ENCODE measurements at regions of chr9 and their contacts with region 1.

Region 1: GRCh38 chr9:89602978-89603766 is 1.6 kb upstream of the GADD45G start:
- DNase-seq: peak; percentile 85
- H3K4me3 Mint-ChIP-seq: peak overlapping the region; percentile 92
- H3K27ac Mint-ChIP-seq: peak overlapping the region; percentile 81
- H3K4me1 Mint-ChIP-seq: peaks cover 32% of the 10 kb centered on the region
- H3K27me3 Mint-ChIP-seq: peaks cover 10% of the 10 kb centered on the region

Region 2: GRCh38 chr9:89310475-89311346 is 292.5 kb before region 1 on chr9 and contains the start of gene CKS2:
- intact Hi-C with region 1: loop called (anchors 2 kb)
- DNase-seq: peak; percentile 100
- H3K4me3 Mint-ChIP-seq: peak within 1 kb of the TSS; percentile 92
- H3K27ac Mint-ChIP-seq: peak within 1 kb of the TSS; percentile 98
- H3K4me1 Mint-ChIP-seq: peaks cover 31% of the 10 kb centered on the region
- H3K27me3 Mint-ChIP-seq: peaks cover 2% of the 10 kb centered on the region
- total RNA-seq, gene CKS2: 148 and 162 TPM in 2 replicates

Region 3: GRCh38 chr9:89418882-89419640 is 184.1 kb before region 1 on chr9:
- intact Hi-C with region 1: loop called (anchors 2 kb)
- DNase-seq: peak; percentile 65
- H3K4me3 Mint-ChIP-seq: peak overlapping the region; percentile 92
- H3K27ac Mint-ChIP-seq: peak overlapping the region; percentile 100
- H3K4me1 Mint-ChIP-seq: peaks cover 99% of the 10 kb centered on the region
- H3K27me3 Mint-ChIP-seq: no peaks in the 10 kb centered on the region

Region 4: GRCh38 chr9:89738137-89738932 is 135.2 kb after region 1 on chr9:
- intact Hi-C with region 1: loop called (anchors 1 kb)
- DNase-seq: no peak
- H3K4me3 Mint-ChIP-seq: no peak overlapping the region
- H3K27ac Mint-ChIP-seq: peak overlapping the region; percentile 86
- H3K4me1 Mint-ChIP-seq: peaks cover 70% of the 10 kb centered on the region
- H3K27me3 Mint-ChIP-seq: no peaks in the 10 kb centered on the region

Region 5: GRCh38 chr9:89781838-89782517 is 178.8 kb after region 1 on chr9:
- intact Hi-C with region 1: no loop called
- DNase-seq: no peak
- H3K4me3 Mint-ChIP-seq: no peak overlapping the region
- H3K27ac Mint-ChIP-seq: no peak overlapping the region
- H3K4me1 Mint-ChIP-seq: peaks cover 11% of the 10 kb centered on the region
- H3K27me3 Mint-ChIP-seq: peaks cover 25% of the 10 kb centered on the region

Region 6: DNA sequence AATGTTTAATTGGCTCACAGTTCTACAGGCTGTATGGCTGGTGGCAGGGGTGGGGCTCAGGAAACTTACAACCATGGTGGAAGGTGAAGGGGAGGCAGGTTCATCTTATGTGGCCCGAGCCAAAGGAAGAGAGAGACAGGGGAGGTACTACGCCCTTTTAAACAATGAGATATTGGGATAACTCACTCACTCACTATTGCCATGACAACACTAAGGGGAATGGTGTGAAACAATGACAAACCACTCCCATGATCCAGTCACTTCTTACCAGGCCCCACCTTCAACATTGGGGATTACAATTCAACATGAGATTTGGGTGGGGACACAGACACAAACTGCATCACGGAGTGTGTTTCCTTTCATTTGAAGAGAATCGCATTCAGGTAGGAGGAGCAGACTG is 222.5 kb after region 1 on chr9:
- intact Hi-C with region 1: loop called (anchors 2 kb)
- DNase-seq: no peak
- H3K4me3 Mint-ChIP-seq: no peak overlapping the region
- H3K27ac Mint-ChIP-seq: no peak overlapping the region
- H3K4me1 Mint-ChIP-seq: peaks cover 43% of the 10 kb centered on the region
- H3K27me3 Mint-ChIP-seq: peaks cover 1% of the 10 kb centered on the region

Region 7: GRCh38 chr9:89984214-89984613 is 381.0 kb after region 1 on chr9:
- intact Hi-C with region 1: loop called (anchors 1 kb)
- DNase-seq: no peak
- H3K4me3 Mint-ChIP-seq: peak overlapping the region; percentile 61
- H3K27ac Mint-ChIP-seq: peak overlapping the region; percentile 93
- H3K4me1 Mint-ChIP-seq: peaks cover 67% of the 10 kb centered on the region
- H3K27me3 Mint-ChIP-seq: peaks cover 2% of the 10 kb centered on the region

Region 8: DNA sequence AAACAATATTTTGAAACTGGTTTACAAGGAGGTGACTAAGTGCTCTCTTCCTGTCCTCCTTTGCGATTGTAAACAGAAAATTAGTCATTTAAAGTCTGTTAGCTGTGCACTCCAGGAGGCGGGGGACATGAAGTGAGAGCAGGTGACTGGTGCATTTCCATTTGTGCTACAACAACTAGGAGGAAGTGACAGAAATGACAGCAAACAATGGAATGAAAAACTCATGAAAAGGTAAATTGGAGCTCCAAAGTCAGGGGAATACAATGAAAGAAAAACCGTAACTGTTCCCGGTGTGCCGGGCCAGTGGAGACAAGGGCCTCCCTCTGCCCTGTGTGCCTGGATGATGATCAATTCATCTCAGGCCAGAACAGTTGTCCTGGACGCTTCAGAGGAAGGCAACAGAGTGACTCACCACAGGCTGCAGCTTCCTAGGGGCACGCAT is 441.6 kb after region 1 on chr9:
- intact Hi-C with region 1: loop called (anchors 1 kb)
- DNase-seq: peak; percentile 9
- H3K4me3 Mint-ChIP-seq: no peak overlapping the region
- H3K27ac Mint-ChIP-seq: peak overlapping the region; percentile 86
- H3K4me1 Mint-ChIP-seq: peaks cover 29% of the 10 kb centered on the region
- H3K27me3 Mint-ChIP-seq: no peaks in the 10 kb centered on the region